ENCODE measurements at regions of chr9 and their contacts with region 1.

Region 1: GRCh38 chr9:74773886-74774479 is 113.7 kb downstream of the TRPM6 start:
- DNase-seq: no peak
- H3K4me3 ChIP-seq: no peak overlapping the region
- H3K27ac ChIP-seq: no peak overlapping the region
- H3K4me1 ChIP-seq: no peaks in the 10 kb centered on the region
- H3K27me3 ChIP-seq: peaks cover 0 to 6% (median 0%) of the 10 kb centered on the region in 4 donors
- CTCF ChIP-seq: peak; percentile 73 to 90 (median 84)
- POLR2A ChIP-seq: no peak

Region 2: DNA sequence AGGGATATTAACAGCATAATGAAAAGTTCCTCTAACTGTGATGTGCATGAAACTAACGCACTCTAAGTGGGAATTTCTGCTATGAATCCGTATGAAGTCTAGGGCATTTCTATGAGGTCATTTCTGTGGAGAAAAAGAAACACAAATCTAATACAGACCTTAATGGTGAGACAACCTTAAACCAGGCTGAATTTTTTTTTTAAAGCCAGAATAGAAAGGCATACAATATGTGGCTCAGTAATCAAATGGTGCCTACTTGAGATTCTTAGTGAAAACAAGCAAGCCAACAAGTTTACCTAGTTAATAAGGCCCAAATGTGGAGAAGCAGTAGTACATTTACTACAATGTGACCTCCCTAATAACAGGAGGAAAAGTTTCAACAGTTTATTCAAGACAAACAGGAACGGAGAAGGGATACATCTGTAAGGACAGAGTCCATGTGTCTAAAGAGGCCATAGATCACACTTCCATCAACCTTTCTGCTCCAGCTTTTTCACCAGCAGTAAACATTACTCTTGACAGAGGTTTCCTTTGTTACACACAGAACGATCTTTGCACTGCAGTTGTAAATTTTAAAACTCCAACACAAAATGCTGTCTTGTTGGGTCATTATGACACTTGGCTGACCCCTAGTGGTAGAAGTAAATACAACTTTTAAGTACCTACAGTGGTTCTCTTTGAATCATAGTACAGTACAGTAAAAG is 227.9 kb after region 1 on chr9:
- intact Hi-C with region 1: loop called (anchors 5 kb)
- DNase-seq: no peak
- H3K4me3 ChIP-seq: no peak overlapping the region
- H3K27ac ChIP-seq: no peak overlapping the region
- H3K4me1 ChIP-seq: peaks cover 0 to 2% (median 0%) of the 10 kb centered on the region in 3 donors
- H3K27me3 ChIP-seq: no peaks in the 10 kb centered on the region
- CTCF ChIP-seq: peak; percentile 62 to 81 (median 70)
- POLR2A ChIP-seq: no peak

Region 3: DNA sequence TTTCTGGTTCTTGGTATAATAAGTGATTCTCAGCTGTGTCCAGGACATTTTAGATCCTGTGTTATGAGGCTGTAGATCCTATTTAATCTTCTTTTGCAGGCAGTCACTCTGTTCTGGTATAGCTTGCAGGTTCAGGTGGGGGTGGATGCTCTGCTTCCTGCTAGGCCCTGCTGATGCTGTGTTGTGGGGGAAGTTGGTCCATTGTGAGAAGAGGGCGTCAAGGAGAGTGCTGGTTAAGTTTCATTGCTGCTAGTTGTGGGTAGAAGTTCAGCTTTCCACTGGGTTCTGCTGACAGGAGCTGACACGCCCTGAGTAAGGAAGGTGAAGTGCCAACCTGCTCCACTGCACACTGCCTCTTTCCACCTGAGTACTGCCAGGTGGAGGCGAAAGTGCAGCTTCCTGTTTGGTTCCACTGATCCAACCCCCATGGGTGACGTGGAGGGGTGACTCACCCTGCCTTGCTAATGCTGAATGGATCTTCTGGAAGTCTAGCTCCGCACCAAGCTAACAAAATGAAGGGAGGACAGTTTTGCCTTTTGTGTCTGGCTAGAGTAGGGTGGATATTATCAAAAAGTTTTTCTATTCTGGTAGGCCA is 297.6 kb after region 1 on chr9:
- intact Hi-C with region 1: loop called (anchors 5 kb)
- DNase-seq: no peak
- H3K4me3 ChIP-seq: peak overlapping the region in 2 of 4 donors; percentile 23 to 24
- H3K27ac ChIP-seq: peak overlapping the region; percentile 66 to 80 (median 74)
- H3K4me1 ChIP-seq: peaks cover 0 to 12% (median 0%) of the 10 kb centered on the region in 3 donors
- H3K27me3 ChIP-seq: no peaks in the 10 kb centered on the region
- CTCF ChIP-seq: no peak
- POLR2A ChIP-seq: no peak